ENCODE measurements at regions of chr10 and their contacts with region 1.

Region 1: DNA sequence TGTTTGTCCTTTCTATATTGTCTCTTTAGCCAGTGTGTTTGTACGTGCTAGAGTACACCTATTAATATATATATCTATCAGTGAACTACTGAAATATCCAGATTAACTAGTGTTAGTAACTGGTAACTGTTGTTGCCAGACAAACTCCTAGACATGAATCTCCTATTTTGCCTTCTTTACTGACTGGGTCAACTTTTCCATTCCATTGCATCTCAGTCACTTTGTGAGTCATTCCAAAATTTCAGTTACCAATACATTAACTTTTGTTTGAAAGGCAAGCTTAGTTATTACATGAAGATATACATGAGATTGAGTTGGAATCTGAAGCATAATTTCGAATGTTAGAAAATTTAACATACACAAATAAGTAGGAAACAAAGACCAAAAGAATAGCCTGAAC is 51.4 kb downstream of the BTAF1 start:
- DNase-seq: no peak
- H3K4me3 Mint-ChIP-seq: peak overlapping the region; percentile 16
- H3K27ac Mint-ChIP-seq: peak overlapping the region; percentile 83
- H3K4me1 Mint-ChIP-seq: peaks cover 65% of the 10 kb centered on the region
- H3K27me3 Mint-ChIP-seq: no peaks in the 10 kb centered on the region

Region 2: DNA sequence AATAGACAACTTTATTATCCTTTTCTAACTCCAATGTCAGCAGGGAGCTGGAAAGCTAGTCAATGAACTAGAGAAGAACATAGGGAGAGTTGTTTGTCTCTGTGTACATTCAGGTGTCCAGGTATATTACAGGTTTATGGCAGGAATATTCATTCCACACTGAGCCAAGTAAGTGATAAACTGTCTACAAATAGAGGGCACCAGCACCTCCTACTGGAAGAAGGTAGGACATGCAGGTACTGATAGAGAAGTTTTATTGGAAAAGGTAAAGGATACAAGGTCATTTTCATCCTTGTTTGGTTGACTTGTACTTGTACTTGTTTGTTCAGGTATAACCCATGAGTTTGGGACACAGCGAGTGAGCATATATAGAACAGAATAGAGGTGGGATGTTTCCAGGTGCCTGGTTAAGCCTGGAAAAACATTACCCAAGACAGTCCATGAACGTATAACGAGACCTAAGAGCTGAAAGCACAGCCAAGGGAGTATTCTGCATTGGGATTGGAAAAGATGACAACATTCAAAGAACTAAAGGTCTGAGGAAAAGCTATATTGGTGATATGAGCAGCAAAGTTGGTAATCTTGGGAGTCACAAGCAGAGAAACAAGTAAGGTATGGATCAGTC is 280.7 kb before region 1 on chr10:
- intact Hi-C with region 1: no loop called
- DNase-seq: no peak
- H3K4me3 Mint-ChIP-seq: no peak overlapping the region
- H3K27ac Mint-ChIP-seq: no peak overlapping the region
- H3K4me1 Mint-ChIP-seq: peaks cover 9% of the 10 kb centered on the region
- H3K27me3 Mint-ChIP-seq: peaks cover 3% of the 10 kb centered on the region

Region 3: GRCh38 chr10:91901784-91902677 is 72.9 kb before region 1 on chr10:
- intact Hi-C with region 1: loop called (anchors 1 kb)
- DNase-seq: no peak
- H3K4me3 Mint-ChIP-seq: peak overlapping the region; percentile 45
- H3K27ac Mint-ChIP-seq: peak overlapping the region; percentile 90
- H3K4me1 Mint-ChIP-seq: peaks cover 28% of the 10 kb centered on the region
- H3K27me3 Mint-ChIP-seq: peaks cover 4% of the 10 kb centered on the region

Region 4: GRCh38 chr10:91944880-91945630 is 29.9 kb before region 1 on chr10:
- intact Hi-C with region 1: loop called (anchors 1 kb)
- DNase-seq: peak; percentile 17
- H3K4me3 Mint-ChIP-seq: peak overlapping the region; percentile 59
- H3K27ac Mint-ChIP-seq: peak overlapping the region; percentile 95
- H3K4me1 Mint-ChIP-seq: peaks cover 29% of the 10 kb centered on the region
- H3K27me3 Mint-ChIP-seq: no peaks in the 10 kb centered on the region

Region 5: GRCh38 chr10:92011560-92012214 is 36.7 kb after region 1 on chr10:
- intact Hi-C with region 1: loop called (anchors 2 kb)
- DNase-seq: no peak
- H3K4me3 Mint-ChIP-seq: no peak overlapping the region
- H3K27ac Mint-ChIP-seq: no peak overlapping the region
- H3K4me1 Mint-ChIP-seq: peaks cover 19% of the 10 kb centered on the region
- H3K27me3 Mint-ChIP-seq: no peaks in the 10 kb centered on the region